Left cardiac atrium (tissue), 4 donors: ENCODE measurements at regions of chr19 and their contacts with region 1.

Region 1: DNA sequence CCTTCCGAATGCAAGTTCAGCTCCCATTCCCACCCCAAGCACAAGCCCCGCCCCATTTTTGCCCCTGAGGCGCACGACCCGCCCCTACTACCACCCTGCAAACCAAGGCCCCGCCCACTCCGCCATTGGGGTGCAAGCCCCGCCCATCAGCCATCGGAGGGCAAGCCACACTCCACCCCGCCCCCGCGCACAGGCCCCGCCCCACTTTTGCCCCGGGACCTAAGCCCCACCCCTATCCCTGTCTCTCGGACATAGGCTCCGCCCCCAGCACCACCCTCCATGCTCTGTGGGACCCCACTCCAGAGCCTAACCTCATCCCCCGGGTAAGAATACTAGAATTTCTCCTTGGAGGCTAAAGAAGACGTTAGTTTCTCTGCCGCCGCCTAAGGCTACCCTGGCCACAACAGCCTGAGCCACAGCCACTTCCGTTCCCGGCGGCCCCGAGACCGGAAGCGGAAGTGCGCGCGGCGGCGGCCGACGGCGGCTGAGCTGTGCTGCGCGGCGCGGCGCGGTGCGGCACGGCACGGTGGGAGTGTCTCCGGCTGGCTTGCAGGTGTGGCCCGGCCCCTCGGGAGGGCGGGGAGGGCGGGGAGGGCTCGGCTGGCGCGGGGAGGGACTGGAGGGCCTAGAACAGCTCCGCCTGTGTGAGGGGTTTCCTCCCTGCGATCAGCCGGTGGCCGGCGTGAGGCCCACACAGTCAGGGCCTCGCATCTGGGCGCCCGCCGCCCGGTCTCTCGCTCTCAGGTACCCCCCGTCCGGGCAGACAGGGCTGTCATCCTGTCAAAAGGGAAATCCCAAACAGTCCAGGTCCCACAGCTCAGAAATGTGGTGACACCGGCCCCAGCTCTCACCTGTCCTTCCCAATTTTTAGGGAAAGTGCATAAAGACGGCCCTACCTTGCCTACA is at the start of gene ZNF333:
- DNase-seq: peak; percentile 98
- ATAC-seq: peak; percentile 99
- total RNA-seq, gene ZNF333: 7.2 to 9.4 TPM

Region 2: GRCh38 chr19:14571695-14572490 is 118.0 kb before region 1 on chr19 and contains the start of gene NDUFB7:
- intact Hi-C with region 1: loop called in 1 of 2 experiments (anchors 5 kb)
- DNase-seq: peak; percentile 93
- ATAC-seq: peak; percentile 97 to 98
- total RNA-seq, gene NDUFB7: 357 to 393 TPM

Region 3: GRCh38 chr19:14595516-14595915 is 94.3 kb before region 1 on chr19:
- intact Hi-C with region 1: no loop called
- DNase-seq: no peak
- ATAC-seq: no peak